ENCODE measurements at regions of chr20 and their contacts with region 1.

Region 1: GRCh38 chr20:21719592-21720214 is 14.2 kb downstream of the PAX1 start:
- DNase-seq: peak in 39 of 42 donors; percentile 28 to 91 (median 77)

Region 2: GRCh38 chr20:22312744-22313346 is 593.1 kb after region 1 on chr20:
- intact Hi-C with region 1: loop called (anchors 5 kb)
- DNase-seq: peak in 38 of 42 donors; percentile 7 to 77 (median 42)

Measured in head of caudate nucleus (tissue), 42 donors.